ENCODE measurements at regions of chr19 and their contacts with region 1.

Region 1: DNA sequence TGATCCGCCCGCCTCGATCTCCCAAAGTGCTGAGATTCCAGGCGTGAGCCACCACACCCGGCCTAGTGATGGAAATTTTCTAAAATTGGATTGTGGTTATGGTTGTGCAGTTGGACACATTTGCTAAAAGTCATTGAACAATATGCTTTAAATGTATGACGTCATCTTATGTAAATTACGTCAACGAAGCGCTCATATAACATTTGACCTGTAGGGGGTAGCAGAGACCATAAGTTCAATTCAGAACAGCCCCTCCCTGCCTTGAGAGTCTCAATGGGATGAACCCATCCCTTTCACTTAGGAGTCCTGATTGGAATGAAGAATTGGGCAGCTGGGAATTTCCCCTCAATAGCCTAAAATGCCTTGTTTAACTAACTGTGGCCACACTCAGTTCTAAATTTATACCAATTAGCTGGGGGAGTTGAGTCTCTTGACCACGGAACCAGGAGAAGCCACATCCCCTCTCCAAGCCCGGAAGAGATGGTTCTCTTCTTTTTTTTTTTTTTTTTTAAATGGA is 15.3 kb upstream of the TLE6 start:
- DNase-seq: peak; percentile 75
- ATAC-seq: peak; percentile 79
- H3K4me3 Mint-ChIP-seq: peak overlapping the region; percentile 59
- H3K27ac Mint-ChIP-seq: peak overlapping the region; percentile 49
- H3K4me1 Mint-ChIP-seq: peaks cover 5% of the 10 kb centered on the region
- H3K27me3 Mint-ChIP-seq: no peaks in the 10 kb centered on the region

Region 2: DNA sequence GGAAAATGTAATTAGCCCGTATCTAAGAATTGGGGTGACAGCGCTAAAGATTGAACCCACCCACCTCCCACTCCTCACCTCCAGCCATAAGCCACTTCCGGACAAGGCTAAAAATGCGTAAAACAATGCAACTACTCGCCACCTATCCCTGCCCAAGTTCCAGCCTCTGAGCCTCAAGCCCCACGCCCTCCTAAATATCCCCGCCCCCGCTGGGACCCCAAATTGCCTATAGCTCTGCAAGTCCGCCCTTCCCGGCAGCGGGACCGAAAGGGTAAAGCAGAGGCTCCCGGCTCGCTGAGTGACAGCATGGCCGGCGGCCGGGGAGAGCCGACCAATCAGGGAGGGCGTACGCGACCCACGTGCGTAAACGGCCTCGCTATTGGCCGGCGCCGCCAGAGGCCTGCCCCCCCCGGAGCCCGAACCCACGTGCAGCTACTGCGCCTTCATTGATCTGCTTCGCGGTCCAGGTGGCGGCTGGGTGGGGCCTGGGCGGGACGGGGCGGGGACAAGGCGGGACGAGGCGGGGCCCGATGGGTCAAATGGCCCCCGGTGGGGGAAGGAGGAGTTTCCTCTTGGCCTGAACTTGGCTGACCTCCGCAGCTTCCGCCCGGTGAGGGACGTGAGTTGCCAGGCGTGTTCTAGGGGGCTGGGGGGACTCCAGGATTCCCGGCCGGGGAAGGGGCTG is 15.0 kb after region 1 on chr19 and contains the start of gene TLE6:
- CTCF ChIA-PET with region 1: interaction called, 14 read pairs
- POLR2A ChIA-PET with region 1: no interaction called
- DNase-seq: peak; percentile 97
- ATAC-seq: peak; percentile 100
- H3K4me3 Mint-ChIP-seq: peak within 1 kb of the TSS; percentile 94
- H3K27ac Mint-ChIP-seq: peak within 1 kb of the TSS; percentile 93
- H3K4me1 Mint-ChIP-seq: peaks cover 21% of the 10 kb centered on the region
- H3K27me3 Mint-ChIP-seq: peaks cover 9% of the 10 kb centered on the region
- total RNA-seq, gene TLE6: 2.0 to 2.7 TPM

Region 3: DNA sequence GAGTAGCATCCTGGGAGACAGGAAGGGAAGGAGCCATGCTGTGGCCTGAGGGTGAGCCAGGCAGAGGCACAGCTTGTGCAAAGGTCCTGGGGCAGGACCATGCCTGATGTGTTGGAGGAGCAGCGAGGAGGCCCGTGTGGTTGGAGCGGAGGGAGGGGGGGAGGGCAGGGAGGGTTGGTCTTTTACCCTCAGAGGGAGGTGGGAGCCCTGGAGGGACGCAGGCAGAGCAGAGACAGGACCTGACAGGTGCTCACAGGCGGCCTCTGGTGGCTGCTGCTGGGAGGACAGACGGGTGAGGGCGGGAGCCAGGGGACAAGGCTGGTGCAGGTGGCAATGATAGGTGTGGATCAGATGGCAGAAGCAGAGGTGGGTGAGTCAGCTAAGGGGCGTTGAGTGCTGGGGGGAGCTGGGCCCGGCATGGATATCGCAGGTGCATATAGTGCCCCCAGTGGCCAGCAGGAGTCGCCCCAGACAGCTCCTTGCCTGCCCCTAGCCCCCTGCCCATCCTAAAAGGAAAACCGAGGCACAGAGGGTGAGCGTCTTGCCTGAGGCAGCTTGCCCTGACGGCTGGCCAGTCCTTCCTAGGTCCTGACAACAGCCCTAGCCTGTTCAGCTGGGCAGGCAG is 163.9 kb after region 1 on chr19:
- CTCF ChIA-PET with region 1: interaction called, 11 read pairs
- POLR2A ChIA-PET with region 1: no interaction called
- DNase-seq: peak; percentile 64
- ATAC-seq: peak; percentile 95
- H3K4me3 Mint-ChIP-seq: no peak overlapping the region
- H3K27ac Mint-ChIP-seq: no peak overlapping the region
- H3K4me1 Mint-ChIP-seq: peaks cover 12% of the 10 kb centered on the region
- H3K27me3 Mint-ChIP-seq: peaks cover 3% of the 10 kb centered on the region

Region 4: DNA sequence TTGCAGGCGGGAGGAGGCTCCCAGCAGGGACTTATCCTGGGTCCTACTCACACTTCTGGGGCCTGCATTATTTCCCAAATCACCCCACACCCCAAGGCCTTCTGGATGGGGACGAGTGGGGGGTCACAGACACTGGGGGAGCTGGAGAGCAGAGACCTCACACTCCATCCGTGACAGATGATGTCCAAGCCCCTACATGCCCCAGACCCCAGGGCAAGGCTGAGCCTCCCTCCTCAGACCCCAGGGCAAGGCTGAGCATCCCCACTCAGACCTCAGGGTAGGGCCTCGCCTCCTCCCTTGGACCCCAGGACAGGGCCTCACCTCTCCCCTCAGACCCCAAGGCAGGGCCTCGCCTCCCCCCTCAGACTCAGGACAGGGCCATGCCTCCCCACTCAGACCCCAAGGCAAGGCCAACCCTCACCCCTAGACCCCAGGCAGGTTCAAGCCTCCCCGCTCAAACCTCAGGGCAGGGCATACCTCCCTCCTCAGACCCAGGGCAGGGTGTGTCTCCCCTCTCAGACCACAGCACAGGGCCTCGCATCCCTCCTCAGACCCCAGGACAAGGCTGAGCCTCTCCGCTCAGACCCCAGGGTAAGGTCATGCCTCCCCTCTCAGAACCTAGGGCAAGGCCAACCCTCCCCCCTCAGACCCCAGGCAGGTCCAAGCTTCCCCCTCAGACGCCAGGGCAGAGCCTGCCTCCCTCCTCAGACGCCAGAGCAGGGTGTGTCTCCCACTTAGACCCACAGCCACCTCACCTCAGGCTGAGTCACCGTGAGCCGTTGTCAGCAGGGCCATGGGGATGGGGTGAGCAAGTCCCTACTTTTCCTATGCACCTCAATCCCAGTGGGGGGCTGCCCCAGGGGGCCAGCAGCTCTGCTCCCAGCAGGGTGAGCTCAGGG is 214.7 kb after region 1 on chr19:
- CTCF ChIA-PET with region 1: no interaction called
- POLR2A ChIA-PET with region 1: no interaction called
- DNase-seq: peak; percentile 85
- ATAC-seq: peak; percentile 58
- H3K4me3 Mint-ChIP-seq: peak overlapping the region; percentile 69
- H3K27ac Mint-ChIP-seq: peak overlapping the region; percentile 96
- H3K4me1 Mint-ChIP-seq: peaks cover 32% of the 10 kb centered on the region
- H3K27me3 Mint-ChIP-seq: no peaks in the 10 kb centered on the region

Measured in activated CD8-positive, alpha-beta T cell treated with anti-CD3 and anti-CD28 coated beads, Interleukin-2, amount 10 ng/mL, durations not matched to agents 7 days and 5 days (primary cell).